Lower lobe of right lung (tissue), 2 donors: ENCODE measurements at regions of chr5 and their contacts with region 1.

Region 1: GRCh38 chr5:139844472-139845145 is 49.0 kb downstream of the PSD2 start:
- DNase-seq: peak; percentile 82
- ATAC-seq: peak; percentile 40 to 66
- H3K4me3 ChIP-seq: no peak overlapping the region
- H3K27ac ChIP-seq: no peak overlapping the region
- H3K4me1 ChIP-seq: peaks cover 16% of the 10 kb centered on the region
- H3K27me3 ChIP-seq: peaks cover 21% of the 10 kb centered on the region
- CTCF ChIP-seq: peak; percentile 87

Region 2: DNA sequence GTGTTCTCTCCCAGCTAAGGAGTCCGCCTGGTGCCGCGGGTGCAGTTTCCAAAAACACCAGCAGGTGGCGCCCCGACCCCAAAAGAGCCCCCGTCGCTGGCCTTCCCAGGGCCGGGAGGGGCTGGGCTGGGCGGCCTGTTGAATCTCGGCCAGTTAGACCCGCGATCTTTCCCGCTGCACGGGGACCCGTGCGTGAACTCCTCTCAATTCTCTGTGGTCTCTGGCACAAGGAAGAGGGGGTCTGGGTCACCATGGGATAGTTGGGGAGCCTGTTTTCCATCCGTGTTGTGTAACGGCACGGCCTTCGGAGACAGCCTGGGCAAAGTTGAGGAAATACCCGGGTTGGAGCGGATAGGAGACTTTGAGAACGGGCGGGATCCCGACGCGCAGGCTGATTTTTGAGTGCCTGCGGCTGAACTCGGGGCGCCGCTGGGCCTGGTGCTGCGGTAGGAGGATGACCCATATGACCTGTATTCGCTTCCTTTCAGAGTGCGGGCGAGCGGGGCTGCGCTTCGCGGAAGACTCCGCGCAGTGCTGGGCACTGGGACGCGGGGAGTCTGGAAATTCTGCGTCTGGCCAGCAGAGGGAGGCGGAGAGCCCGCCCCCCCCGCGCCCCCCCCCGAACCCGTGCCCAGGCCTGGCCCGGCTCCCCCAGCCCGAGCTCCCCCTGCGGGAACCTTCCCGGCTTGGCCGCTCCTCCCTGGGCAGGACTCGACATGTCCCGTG is 56.9 kb before region 1 on chr5:
- intact Hi-C with region 1: loop called (anchors 5 kb)
- DNase-seq: peak; percentile 85
- ATAC-seq: peak; percentile 94 to 95
- H3K4me3 ChIP-seq: peak overlapping the region; percentile 68
- H3K27ac ChIP-seq: peak overlapping the region; percentile 18
- H3K4me1 ChIP-seq: peaks cover 5% of the 10 kb centered on the region
- H3K27me3 ChIP-seq: no peaks in the 10 kb centered on the region
- CTCF ChIP-seq: peak; percentile 92